ENCODE measurements at regions of chr11 and their contacts with region 1.

Region 1: DNA sequence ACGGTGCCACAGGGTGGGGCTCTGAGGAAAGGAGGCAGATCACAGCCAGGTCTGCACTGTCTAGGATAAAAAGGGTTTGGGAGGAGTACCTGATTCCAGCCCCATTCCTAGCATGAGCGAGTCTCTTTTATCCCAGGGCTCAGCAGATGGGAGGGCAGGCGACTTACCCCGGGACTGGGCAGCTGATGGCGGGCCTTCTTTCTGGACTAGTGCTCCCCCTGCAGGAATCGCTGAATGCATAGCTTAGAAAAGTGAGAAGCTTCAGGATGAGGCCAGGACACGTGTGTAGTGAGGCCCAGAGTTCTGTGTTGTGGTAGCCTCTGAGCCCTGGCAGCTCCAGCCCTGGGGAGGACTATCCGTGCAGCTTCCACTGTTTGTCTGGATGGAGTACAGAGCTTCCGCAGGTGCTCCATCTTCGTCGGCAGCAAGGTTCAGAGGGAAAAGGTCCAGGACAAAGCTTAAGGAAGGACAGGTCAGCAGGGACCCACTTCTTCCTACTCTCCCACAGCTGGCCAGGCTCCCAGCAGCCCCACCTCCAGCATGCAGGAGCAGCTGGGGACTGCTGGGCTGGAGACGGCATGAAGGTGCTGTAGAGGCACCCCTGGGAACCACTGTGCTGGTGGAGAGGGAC is 30.4 kb downstream of the COMMD9 start:
- DNase-seq: peak; percentile 25 to 64 (median 42)
- ATAC-seq: peak; percentile 96
- H3K4me3 ChIP-seq: no peak overlapping the region
- H3K27ac ChIP-seq: no peak overlapping the region
- H3K4me1 ChIP-seq: no peaks in the 10 kb centered on the region
- H3K27me3 ChIP-seq: peaks cover 5 to 22% of the 10 kb centered on the region in 2 experiments; a peak in 4 of 5 replicates
- CTCF ChIP-seq: peak; percentile 61 to 79 (median 75)
- EP300 ChIP-seq: no peak
- POLR2A ChIP-seq: no peak
- RAD21 ChIP-seq: peak; percentile 86 to 87

Region 2: DNA sequence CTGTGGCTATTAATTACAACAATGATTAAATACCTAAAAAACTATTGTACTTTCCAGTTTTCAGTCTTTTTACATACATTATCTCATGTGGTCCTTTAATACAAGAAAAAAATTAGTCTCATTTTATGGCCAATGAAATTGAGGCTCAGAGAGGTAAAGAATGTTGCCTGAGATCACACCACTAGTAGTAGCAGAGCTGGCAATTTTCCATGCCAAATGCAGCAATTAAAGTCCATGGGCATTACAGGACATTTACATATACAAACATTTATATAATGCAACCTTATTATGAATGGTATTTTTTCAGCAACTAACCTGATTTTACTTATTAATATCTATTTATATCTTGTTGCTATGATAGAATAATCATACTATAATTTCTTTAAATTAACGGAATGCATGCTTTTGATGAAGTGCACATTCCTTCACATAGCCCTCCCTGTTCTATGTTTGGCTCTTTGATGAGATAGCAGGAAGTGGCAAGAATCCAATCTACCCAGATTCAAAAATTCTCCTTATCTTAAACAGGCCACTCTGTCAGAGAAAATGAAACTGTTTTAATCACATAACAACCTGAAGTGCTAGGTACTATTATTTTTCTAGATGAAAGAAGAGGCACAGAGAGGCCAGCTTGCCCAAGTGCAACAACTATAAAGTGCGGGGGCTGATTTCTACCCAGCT is 435.9 kb before region 1 on chr11:
- CTCF ChIA-PET with region 1: no interaction called
- POLR2A ChIA-PET with region 1: no interaction called
- in situ Hi-C with region 1: no loop called
- intact Hi-C with region 1: loop called (anchors 5 kb)
- DNase-seq: no peak
- ATAC-seq: no peak
- H3K4me3 ChIP-seq: no peak overlapping the region
- H3K27ac ChIP-seq: no peak overlapping the region
- H3K4me1 ChIP-seq: no peaks in the 10 kb centered on the region; a peak in 2 of 5 replicates
- H3K27me3 ChIP-seq: peaks cover 3 to 16% of the 10 kb centered on the region in 2 experiments; a peak in 3 of 5 replicates
- CTCF ChIP-seq: no peak
- EP300 ChIP-seq: no peak
- POLR2A ChIP-seq: no peak
- RAD21 ChIP-seq: no peak

Region 3: GRCh38 chr11:36041988-36042611 is 216.7 kb before region 1 on chr11:
- CTCF ChIA-PET with region 1: no interaction called
- POLR2A ChIA-PET with region 1: no interaction called
- in situ Hi-C with region 1: loop called (anchors 10 kb)
- intact Hi-C with region 1: loop called (anchors 5 kb)
- DNase-seq: peak in 3 of 4 experiments; percentile 15 to 53 (median 30)
- ATAC-seq: peak; percentile 86
- H3K4me3 ChIP-seq: no peak overlapping the region
- H3K27ac ChIP-seq: no peak overlapping the region
- H3K4me1 ChIP-seq: no peaks in the 10 kb centered on the region
- H3K27me3 ChIP-seq: no peaks in the 10 kb centered on the region
- CTCF ChIP-seq: peak; percentile 51 to 73 (median 54); a peak in 5 of 6 replicates
- EP300 ChIP-seq: no peak
- POLR2A ChIP-seq: no peak
- RAD21 ChIP-seq: peak; percentile 82 to 85

Region 4: GRCh38 chr11:36056160-36056751 is 202.6 kb before region 1 on chr11:
- CTCF ChIA-PET with region 1: no interaction called
- POLR2A ChIA-PET with region 1: no interaction called
- in situ Hi-C with region 1: no loop called
- intact Hi-C with region 1: no loop called
- DNase-seq: peak; percentile 47 to 66 (median 62)
- ATAC-seq: peak; percentile 94
- H3K4me3 ChIP-seq: no peak overlapping the region
- H3K27ac ChIP-seq: no peak overlapping the region
- H3K4me1 ChIP-seq: peaks cover 0 to 6% of the 10 kb centered on the region in 2 experiments; a peak in 1 of 5 replicates
- H3K27me3 ChIP-seq: no peaks in the 10 kb centered on the region; a peak in 1 of 5 replicates
- CTCF ChIP-seq: peak; percentile 62 to 75 (median 65)
- EP300 ChIP-seq: no peak
- POLR2A ChIP-seq: no peak
- RAD21 ChIP-seq: peak; percentile 53 to 69

Region 5: GRCh38 chr11:36149538-36150242 is 109.2 kb before region 1 on chr11:
- CTCF ChIA-PET with region 1: no interaction called
- POLR2A ChIA-PET with region 1: interaction called, 4 read pairs
- in situ Hi-C with region 1: no loop called
- intact Hi-C with region 1: loop called (anchors 1 kb)
- DNase-seq: peak; percentile 84 to 90 (median 88)
- ATAC-seq: peak; percentile 98
- H3K4me3 ChIP-seq: no peak overlapping the region
- H3K27ac ChIP-seq: peak overlapping the region; percentile 82; the same call in 2 of the 3 replicates
- H3K4me1 ChIP-seq: peaks cover 12 to 18% of the 10 kb centered on the region in 2 experiments
- H3K27me3 ChIP-seq: no peaks in the 10 kb centered on the region
- CTCF ChIP-seq: peak; percentile 75 to 92 (median 88)
- EP300 ChIP-seq: peak; percentile 93
- POLR2A ChIP-seq: no peak
- RAD21 ChIP-seq: peak; percentile 88 to 94

Region 6: DNA sequence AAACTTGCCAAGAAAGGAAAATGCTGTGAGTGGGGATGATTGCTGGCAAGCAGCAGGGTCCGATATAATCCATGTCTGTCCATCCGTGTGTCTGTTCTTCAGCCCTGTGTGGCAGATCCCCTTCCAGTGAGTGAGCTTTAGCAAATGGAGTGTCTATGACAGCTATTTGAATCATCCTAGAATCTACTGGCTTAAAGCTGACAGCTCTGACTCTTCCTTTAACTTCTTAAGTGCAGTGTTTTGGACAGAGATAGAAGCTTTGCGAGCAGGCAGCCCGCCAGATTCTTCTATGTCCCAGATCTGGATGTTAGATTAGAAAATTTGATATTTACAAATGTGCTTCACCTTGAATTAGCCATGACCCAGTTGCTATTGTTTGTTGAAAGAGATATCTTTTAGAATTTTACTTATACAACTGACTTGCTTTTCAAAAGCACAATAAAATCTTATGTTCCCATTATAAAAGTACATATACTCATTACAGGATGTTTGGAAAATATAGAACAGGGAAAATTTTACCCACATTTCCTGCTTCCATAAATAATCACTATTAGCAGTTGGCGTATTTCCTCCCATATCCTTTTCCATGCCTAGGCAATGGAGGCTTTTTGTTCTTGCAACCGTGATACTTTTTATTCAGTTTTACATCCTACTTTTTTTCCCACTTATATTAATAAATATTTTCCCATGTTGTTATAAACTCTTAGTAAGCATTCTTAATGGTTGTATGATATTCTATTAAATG is 94.2 kb before region 1 on chr11:
- CTCF ChIA-PET with region 1: no interaction called
- POLR2A ChIA-PET with region 1: no interaction called
- in situ Hi-C with region 1: no loop called
- intact Hi-C with region 1: loop called (anchors 5 kb)
- DNase-seq: no peak
- ATAC-seq: no peak
- H3K4me3 ChIP-seq: no peak overlapping the region
- H3K27ac ChIP-seq: no peak overlapping the region
- H3K4me1 ChIP-seq: peaks cover 0 to 6% of the 10 kb centered on the region in 2 experiments; a peak in 2 of 5 replicates
- H3K27me3 ChIP-seq: peaks cover 5 to 6% of the 10 kb centered on the region in 2 experiments; a peak in 3 of 5 replicates
- CTCF ChIP-seq: no peak
- EP300 ChIP-seq: no peak
- POLR2A ChIP-seq: no peak
- RAD21 ChIP-seq: no peak

Region 7: GRCh38 chr11:36300651-36301050 is 41.8 kb after region 1 on chr11:
- CTCF ChIA-PET with region 1: no interaction called
- POLR2A ChIA-PET with region 1: no interaction called
- in situ Hi-C with region 1: no loop called
- intact Hi-C with region 1: no loop called
- DNase-seq: no peak
- ATAC-seq: no peak
- H3K4me3 ChIP-seq: no peak overlapping the region
- H3K27ac ChIP-seq: no peak overlapping the region
- H3K4me1 ChIP-seq: no peaks in the 10 kb centered on the region
- H3K27me3 ChIP-seq: peaks cover 5 to 11% of the 10 kb centered on the region in 2 experiments
- CTCF ChIP-seq: no peak
- EP300 ChIP-seq: no peak
- POLR2A ChIP-seq: no peak
- RAD21 ChIP-seq: no peak

Measured in K562 (cell line).